Testis (tissue), 5 donors: ENCODE measurements at regions of chr6 and their contacts with region 1.

Region 1: DNA sequence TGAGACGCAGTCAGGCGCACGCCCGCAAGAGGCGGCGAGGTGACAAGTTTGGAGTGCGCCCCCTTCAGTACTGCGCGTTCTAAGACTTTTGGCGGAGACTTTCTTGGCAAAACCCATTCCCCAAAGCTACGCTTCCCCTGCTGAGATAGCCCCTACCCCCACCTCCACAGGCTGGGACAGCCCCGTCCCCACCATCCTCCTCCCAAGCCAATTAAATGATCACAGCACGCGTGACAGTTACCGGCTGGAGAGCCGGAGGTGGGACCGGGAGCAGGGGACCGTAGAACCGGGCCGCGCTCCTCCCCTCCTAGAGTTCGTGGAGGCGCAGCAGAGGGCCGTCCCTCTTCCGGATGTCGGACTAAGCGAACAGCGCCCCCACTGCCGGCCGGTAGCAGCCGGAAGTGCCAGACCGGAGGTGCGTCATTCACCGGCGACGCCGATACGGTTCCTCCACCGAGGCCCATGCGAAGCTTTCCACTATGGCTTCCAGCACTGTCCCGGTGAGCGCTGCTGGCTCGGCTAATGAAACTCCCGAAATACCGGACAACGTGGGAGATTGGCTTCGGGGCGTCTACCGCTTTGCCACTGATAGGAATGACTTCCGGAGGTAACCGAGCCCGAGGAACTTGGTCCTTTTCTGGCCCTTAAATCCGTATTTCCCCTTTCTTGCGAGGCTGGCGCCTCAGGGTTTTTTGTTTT is at the start of gene TOMM6:
- DNase-seq: peak; percentile 97
- H3K4me3 ChIP-seq: peak within 1 kb of the TSS; percentile 90 to 96
- H3K27ac ChIP-seq: peak within 1 kb of the TSS; percentile 57 to 94
- H3K4me1 ChIP-seq: peaks cover 8% of the 10 kb centered on the region
- H3K27me3 ChIP-seq: no peaks in the 10 kb centered on the region
- CTCF ChIP-seq: peak; percentile 83 to 97 (median 95)
- POLR2A ChIP-seq: peak; percentile 44
- total RNA-seq, gene TOMM6: 168 to 172 TPM

Region 2: GRCh38 chr6:41920921-41921711 is 133.7 kb after region 1 on chr6 and contains the starts of genes BYSL and MED20:
- intact Hi-C with region 1: loop called (anchors 5 kb)
- DNase-seq: peak; percentile 97
- H3K4me3 ChIP-seq: peak within 1 kb of the TSS; percentile 66 to 83
- H3K27ac ChIP-seq: peak within 1 kb of the TSS; percentile 95 to 96
- H3K4me1 ChIP-seq: peaks cover 24% of the 10 kb centered on the region
- H3K27me3 ChIP-seq: no peaks in the 10 kb centered on the region
- CTCF ChIP-seq: peak; percentile 98
- POLR2A ChIP-seq: no peak
- total RNA-seq, gene BYSL: 13.7 to 18.7 TPM
- total RNA-seq, gene MED20: 25.1 TPM

Region 3: DNA sequence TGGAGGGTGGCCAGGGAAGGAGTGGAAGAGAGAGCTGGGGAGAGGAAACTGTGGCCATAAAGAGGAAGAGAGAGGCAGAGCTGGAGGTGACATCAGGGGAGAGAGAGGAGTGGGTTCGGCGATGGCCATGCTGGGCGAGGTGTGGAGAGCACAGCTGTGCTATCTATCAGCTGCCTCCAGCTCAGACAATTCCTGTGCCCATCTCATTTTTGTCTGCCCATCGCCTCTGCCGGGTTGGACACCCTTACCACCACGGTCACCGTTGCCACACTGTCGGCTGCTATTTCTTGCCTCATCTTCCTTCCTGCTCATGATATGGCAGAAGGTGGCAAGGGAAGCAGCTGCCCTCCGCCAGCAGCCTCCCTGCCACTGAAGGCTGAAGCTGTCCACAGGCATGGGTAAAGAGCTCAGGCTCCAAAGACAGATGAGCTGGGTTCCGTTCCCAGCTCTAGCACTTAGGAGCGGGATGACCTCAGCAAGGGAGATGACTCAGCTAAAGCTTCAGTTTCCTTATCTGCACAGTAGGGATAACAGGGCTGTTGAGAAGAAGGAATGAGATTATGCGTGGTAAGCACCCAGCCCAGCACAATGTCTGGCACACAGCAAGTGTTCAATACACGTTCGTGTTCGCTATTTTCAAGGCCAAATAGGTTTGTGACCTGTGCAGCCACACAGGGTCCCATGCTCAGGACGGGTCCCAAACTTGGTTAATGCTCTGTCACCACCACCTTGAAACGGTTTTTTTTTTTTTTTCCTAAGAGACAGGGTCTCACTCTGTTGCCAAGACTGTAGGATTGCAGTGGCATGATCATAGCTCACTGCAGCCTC is 241.1 kb after region 1 on chr6:
- intact Hi-C with region 1: no loop called
- DNase-seq: peak; percentile 42
- H3K4me3 ChIP-seq: no peak overlapping the region
- H3K27ac ChIP-seq: peak overlapping the region in 1 of 2 donors; percentile 41
- H3K4me1 ChIP-seq: peaks cover 37% of the 10 kb centered on the region
- H3K27me3 ChIP-seq: no peaks in the 10 kb centered on the region
- CTCF ChIP-seq: no peak
- POLR2A ChIP-seq: no peak